Naive thymus-derived CD4-positive, alpha-beta T cell (primary cell): ENCODE measurements at regions of chr12 and their contacts with region 1.

Region 1: GRCh38 chr12:24902511-24903328 is 46.2 kb downstream of the BCAT1 start:
- DNase-seq: peak in 3 of 9 donors; percentile 5 to 59 (median 7)
- ATAC-seq: peak; percentile 42
- H3K4me3 ChIP-seq: peak overlapping the region; percentile 37
- H3K4me3 Mint-ChIP-seq: peak overlapping the region in 9 of 10 donors; percentile 60 to 99 (median 78)
- H3K27ac ChIP-seq: no peak overlapping the region
- H3K27ac Mint-ChIP-seq: peak overlapping the region in 1 of 9 donors; percentile 96
- H3K4me1 ChIP-seq: no peaks in the 10 kb centered on the region
- H3K4me1 Mint-ChIP-seq: peaks cover 9 to 41% (median 16%) of the 10 kb centered on the region in 7 donors
- H3K27me3 ChIP-seq: no peaks in the 10 kb centered on the region
- H3K27me3 Mint-ChIP-seq: peaks cover 13 to 39% (median 35%) of the 10 kb centered on the region in 5 donors

Region 2: GRCh38 chr12:24522736-24523135 is 380.0 kb before region 1 on chr12:
- CTCF ChIA-PET with region 1: no interaction called
- POLR2A ChIA-PET with region 1: no interaction called
- intact Hi-C with region 1: no loop called
- DNase-seq: no peak
- ATAC-seq: no peak
- H3K4me3 ChIP-seq: no peak overlapping the region
- H3K4me3 Mint-ChIP-seq: no peak overlapping the region
- H3K27ac ChIP-seq: no peak overlapping the region
- H3K27ac Mint-ChIP-seq: no peak overlapping the region
- H3K4me1 ChIP-seq: no peaks in the 10 kb centered on the region
- H3K4me1 Mint-ChIP-seq: no peaks in the 10 kb centered on the region
- H3K27me3 ChIP-seq: no peaks in the 10 kb centered on the region
- H3K27me3 Mint-ChIP-seq: no peaks in the 10 kb centered on the region

Region 3: DNA sequence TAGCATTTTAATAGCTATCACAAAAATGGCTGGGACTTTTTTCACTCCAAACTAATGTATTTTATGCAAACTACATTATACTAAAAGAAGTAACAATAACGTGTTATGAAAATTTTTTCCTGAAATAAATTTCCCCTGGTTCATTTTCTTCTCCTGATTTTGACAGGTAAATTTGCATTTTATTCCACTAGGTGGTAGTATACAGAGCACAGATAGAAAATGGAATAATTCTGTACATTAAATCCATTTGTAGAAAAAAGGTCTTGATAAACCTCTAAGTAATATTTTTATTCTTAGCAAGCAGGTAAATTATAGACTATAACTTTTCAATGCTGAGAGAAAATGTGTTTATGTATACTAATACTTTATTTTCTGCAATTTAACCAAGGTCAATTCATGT is 50.3 kb before region 1 on chr12:
- CTCF ChIA-PET with region 1: no interaction called
- POLR2A ChIA-PET with region 1: no interaction called
- intact Hi-C with region 1: loop called in 1 of 2 experiments (anchors 5 kb)
- DNase-seq: no peak
- ATAC-seq: no peak
- H3K4me3 ChIP-seq: no peak overlapping the region
- H3K4me3 Mint-ChIP-seq: no peak overlapping the region
- H3K27ac ChIP-seq: no peak overlapping the region
- H3K27ac Mint-ChIP-seq: no peak overlapping the region
- H3K4me1 ChIP-seq: no peaks in the 10 kb centered on the region
- H3K4me1 Mint-ChIP-seq: peaks cover 0 to 3% (median 0%) of the 10 kb centered on the region in 7 donors
- H3K27me3 ChIP-seq: no peaks in the 10 kb centered on the region
- H3K27me3 Mint-ChIP-seq: peaks cover 4 to 10% (median 6%) of the 10 kb centered on the region in 5 donors

Region 4: GRCh38 chr12:24948757-24949722 is 46.3 kb after region 1 on chr12 and contains the start of gene BCAT1:
- CTCF ChIA-PET with region 1: no interaction called
- POLR2A ChIA-PET with region 1: no interaction called
- intact Hi-C with region 1: loop called in 1 of 2 experiments (anchors 1 kb)
- DNase-seq: peak in 4 of 9 donors; percentile 7 to 62 (median 18)
- ATAC-seq: peak; percentile 72
- H3K4me3 ChIP-seq: peak within 1 kb of the TSS; percentile 51
- H3K4me3 Mint-ChIP-seq: peak within 1 kb of the TSS; percentile 82 to 94 (median 88)
- H3K27ac ChIP-seq: no peak within 1 kb of the TSS
- H3K27ac Mint-ChIP-seq: peak within 1 kb of the TSS in 5 of 9 donors; percentile 36 to 86 (median 62)
- H3K4me1 ChIP-seq: peaks cover 8 to 14% of the 10 kb centered on the region in 2 donors
- H3K4me1 Mint-ChIP-seq: peaks cover 13 to 57% (median 27%) of the 10 kb centered on the region in 7 donors
- H3K27me3 ChIP-seq: peaks cover 0 to 8% of the 10 kb centered on the region in 2 donors
- H3K27me3 Mint-ChIP-seq: peaks cover 21 to 68% (median 62%) of the 10 kb centered on the region in 5 donors
- total RNA-seq, gene BCAT1: 0.70 to 29.3 (median 1.9) TPM